GM10248 (cell line): ENCODE measurements at regions of chr4 and their contacts with region 1.

Region 1: GRCh38 chr4:108118490-108118889 is 50.2 kb downstream of the LEF1 start:
- DNase-seq: peak; percentile 61
- CTCF ChIP-seq: no peak

Region 2: GRCh38 chr4:108094923-108095482 is 23.5 kb before region 1 on chr4:
- CTCF ChIA-PET with region 1: interaction called, 10 read pairs
- POLR2A ChIA-PET with region 1: no interaction called
- DNase-seq: no peak
- CTCF ChIP-seq: no peak

Region 3: GRCh38 chr4:108100827-108101226 is 17.7 kb before region 1 on chr4:
- CTCF ChIA-PET with region 1: interaction called, 15 read pairs
- POLR2A ChIA-PET with region 1: no interaction called
- DNase-seq: no peak
- CTCF ChIP-seq: no peak

Region 4: DNA sequence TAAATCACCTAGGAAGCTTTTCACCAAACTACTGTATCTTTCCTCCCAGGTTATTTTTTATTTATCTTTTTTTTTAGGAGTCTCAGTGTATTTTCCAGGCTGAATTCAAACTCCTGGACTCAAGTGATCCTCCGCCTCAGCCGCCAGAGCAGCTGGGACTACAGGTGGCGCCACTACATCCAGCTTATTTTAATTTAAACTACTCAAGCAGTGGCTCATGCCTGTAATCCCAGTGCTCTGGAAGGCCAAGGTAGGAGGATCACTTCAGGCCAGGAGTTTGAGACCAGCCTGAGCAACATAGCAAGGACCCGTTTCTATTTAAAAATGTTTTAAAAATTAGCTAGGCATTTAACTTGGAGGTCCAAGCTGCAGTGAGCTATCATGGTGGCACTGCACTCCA is 12.5 kb after region 1 on chr4:
- CTCF ChIA-PET with region 1: interaction called, 11 read pairs
- POLR2A ChIA-PET with region 1: interaction called, 3 read pairs
- DNase-seq: no peak
- CTCF ChIP-seq: no peak

Region 5: DNA sequence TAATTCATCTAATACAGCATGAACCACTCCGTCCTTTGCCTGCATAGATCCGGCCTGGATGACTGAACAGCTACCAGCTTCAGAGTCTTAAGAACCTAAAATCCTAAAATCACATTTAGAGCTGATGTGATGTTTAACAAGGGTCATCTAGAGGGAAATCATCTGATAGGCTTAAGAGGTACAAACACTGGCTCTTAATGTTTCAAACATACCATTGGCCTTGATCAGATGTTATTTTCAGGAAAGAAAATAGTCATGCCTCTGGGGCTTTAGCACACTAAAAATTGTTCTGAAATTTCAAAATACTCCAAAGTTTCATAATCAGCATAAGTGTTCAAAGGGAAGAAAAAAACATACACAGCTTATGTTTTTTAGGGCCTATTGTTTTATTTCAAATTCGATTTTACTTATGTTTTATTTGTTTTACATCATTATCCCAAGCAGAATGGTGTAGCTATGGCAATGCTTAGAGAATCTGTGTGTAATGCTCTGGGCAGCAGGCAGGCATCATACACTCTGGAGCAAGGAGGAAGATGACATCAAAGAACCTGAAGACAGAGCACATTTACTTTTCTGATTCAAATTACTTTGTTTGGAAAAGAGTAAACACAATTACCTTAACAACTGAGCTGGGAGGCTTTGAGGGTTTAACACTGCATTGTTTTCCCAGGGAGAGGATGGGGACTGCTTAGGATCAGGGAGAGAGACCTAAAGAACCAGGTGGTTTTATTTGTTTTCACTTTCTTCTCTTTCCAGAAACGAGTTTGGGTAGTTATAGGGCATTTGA is 75.6 kb after region 1 on chr4:
- CTCF ChIA-PET with region 1: no interaction called
- POLR2A ChIA-PET with region 1: no interaction called
- DNase-seq: no peak
- CTCF ChIP-seq: no peak